SK-N-SH (cell line): ENCODE measurements at regions of chr7 and their contacts with region 1.

Region 1: DNA sequence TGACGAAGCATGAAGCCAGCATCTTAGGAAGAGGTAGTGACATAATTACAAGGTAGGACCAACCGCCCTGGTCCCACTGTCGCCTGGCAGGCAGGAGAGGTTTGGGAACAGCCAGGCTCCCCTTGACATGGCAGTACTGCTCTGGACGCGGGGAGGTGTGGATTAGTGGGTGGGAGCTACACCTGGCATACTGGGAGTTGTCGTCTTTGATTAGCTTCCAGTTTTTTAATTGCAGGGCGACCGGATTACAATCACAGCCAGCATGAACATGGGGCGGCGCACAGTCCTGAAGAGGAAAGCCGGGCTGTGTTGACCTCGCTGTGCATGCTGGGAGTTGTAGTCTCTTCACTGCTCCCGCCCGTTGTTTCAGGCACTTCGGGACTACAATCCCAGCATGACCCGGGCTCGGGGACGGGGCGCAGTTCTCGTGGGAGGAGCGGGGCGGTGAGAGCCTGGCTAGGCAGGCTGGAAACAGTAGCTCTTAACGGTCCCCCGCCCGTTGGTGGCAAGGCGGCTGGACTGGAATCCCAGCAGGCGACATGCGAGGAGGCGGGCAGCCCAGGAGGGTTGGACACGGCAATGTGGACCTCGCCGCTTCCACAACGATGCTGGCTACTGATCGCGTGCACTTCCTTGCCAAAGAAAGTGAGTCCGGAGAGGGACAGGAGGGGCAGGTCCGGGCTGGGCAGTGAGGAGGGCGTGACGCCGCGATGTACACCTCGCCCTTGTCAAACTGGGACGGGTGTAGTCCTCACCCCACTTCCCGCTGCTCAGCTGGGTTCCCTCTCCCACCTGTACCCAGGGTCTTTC is 98.0 kb upstream of the ZNF722 start:
- DNase-seq: peak; percentile 95
- H3K4me3 ChIP-seq: peak overlapping the region; percentile 85 to 99
- H3K27ac ChIP-seq: peak overlapping the region in 1 of 2 experiments; percentile 87; a peak in 2 of 4 replicates
- H3K4me1 ChIP-seq: peaks cover 0 to 20% of the 10 kb centered on the region in 2 experiments; a peak in 2 of 4 replicates
- H3K27me3 ChIP-seq: no peaks in the 10 kb centered on the region
- CTCF ChIP-seq: no peak
- EP300 ChIP-seq: no peak
- RAD21 ChIP-seq: no peak

Region 2: DNA sequence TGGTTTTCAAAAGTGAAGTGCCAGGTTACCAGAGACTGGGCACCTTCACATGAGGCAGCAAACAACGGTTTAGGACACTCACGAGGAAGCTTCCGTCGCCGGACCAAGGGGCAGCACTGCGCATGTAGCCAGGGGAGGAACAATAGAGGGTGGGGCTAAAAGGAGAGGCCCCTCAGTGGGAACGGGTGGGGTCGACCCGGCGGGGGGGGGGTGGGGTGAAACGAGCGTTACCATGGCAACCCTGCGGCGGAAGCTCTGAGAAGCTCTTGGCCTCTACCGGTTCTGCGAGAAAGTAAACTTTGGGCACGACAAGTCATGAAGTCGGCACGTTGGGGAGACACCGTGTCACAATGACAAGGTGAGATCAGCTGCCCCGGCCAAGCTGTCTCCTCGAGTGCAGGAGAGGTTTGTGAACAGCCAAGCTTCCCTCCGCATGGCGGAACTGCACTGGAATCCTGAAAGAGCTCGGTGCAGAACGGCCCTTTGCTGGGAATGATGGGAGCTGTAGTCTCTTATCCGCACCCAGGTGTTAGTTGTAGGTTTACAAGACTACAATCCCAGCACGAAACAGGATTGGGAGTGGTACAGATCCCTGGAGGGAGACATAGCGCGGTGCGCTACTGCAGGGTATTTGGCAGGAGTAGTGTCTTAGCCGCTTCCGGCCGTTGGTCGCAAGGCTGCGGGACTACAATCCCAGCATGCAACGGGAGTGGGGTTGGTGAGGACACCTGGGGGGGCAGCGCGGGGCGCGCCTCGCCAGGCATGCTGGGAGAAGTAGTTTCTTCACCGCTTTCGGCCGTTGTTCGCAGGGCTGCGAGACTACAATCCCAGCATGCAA is 25.2 kb after region 1 on chr7:
- CTCF ChIA-PET with region 1: interaction called, 6 read pairs
- POLR2A ChIA-PET with region 1: interaction called, 24 read pairs
- DNase-seq: peak; percentile 96
- H3K4me3 ChIP-seq: peak overlapping the region; percentile 77 to 94
- H3K27ac ChIP-seq: peak overlapping the region; percentile 73 to 100
- H3K4me1 ChIP-seq: peaks cover 0 to 11% of the 10 kb centered on the region in 2 experiments; a peak in 2 of 4 replicates
- H3K27me3 ChIP-seq: no peaks in the 10 kb centered on the region
- CTCF ChIP-seq: no peak
- EP300 ChIP-seq: no peak
- RAD21 ChIP-seq: no peak